Posterior cingulate gyrus (tissue), 11 donors: ENCODE measurements at regions of chr17 and their contacts with region 1.

Region 1: GRCh38 chr17:34998205-34998604 is 17.9 kb downstream of the LIG3 start:
- DNase-seq: peak; percentile 50 to 97 (median 77)

Region 2: GRCh38 chr17:34756637-34757021 is 241.6 kb before region 1 on chr17:
- intact Hi-C with region 1: no loop called
- DNase-seq: peak in 3 of 10 donors; percentile 12 to 83 (median 52)

Region 3: DNA sequence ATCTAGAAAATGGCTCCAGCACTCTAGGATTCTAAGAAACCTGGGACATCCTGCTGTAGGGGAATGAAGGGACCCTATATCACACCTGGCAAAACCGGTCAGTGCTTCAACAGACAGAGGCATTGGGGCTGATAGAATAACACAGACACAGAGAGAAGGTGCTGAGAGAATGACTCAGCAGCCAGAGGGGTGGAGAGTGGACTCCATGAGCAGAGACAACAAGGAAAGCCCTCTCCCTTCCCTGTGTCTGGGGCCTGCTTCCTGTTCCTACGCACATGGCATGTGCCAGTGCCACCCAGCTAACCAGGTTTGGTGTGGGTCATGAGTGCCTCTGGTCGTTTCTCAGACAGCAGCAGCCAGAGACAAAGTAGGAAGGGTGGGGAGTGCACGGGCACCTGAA is 177.3 kb before region 1 on chr17:
- intact Hi-C with region 1: no loop called
- DNase-seq: no peak

Region 4: DNA sequence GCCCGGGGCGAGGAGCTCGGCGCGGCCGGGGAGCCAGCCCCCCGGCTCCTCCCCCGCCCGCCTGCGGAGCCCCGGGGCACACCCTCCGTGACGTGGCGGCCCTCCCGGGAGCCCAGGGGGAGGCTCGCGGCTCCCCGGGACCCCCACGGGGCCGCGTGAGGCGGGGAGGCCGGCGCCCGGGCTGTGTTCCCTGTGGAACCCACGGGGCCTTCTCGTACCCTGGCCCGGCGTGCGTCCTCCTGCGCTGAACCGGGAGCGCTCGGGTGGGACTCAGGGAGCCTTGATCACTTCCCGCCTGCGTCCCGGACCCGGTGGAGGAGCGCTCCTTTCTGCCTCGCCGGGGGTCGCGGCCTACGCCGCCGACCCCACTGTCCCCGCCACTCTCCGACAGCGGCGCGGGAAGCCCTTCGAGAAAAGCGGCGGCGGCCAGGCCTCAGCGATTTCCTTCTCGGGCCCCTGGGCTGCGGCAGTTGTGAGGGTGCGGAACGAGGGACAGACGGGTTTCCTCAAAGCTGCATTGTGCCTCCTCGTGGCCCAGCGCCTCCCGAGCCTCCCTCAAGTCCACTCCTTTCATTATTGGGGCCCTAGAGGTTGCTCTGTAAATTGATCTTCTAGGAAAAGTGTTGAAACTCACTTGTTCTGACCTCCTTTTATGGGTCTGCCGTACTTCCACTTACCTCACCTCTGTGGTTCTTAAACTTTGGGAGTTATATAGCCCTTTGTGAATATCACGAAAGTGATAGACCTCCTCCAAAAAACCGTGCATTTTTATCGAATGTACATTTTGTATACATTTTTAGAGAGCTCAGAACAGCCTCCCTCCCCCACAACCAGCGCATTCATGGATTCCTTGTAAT is 17.3 kb before region 1 on chr17:
- intact Hi-C with region 1: no loop called
- DNase-seq: peak; percentile 41 to 96 (median 65)

Region 5: DNA sequence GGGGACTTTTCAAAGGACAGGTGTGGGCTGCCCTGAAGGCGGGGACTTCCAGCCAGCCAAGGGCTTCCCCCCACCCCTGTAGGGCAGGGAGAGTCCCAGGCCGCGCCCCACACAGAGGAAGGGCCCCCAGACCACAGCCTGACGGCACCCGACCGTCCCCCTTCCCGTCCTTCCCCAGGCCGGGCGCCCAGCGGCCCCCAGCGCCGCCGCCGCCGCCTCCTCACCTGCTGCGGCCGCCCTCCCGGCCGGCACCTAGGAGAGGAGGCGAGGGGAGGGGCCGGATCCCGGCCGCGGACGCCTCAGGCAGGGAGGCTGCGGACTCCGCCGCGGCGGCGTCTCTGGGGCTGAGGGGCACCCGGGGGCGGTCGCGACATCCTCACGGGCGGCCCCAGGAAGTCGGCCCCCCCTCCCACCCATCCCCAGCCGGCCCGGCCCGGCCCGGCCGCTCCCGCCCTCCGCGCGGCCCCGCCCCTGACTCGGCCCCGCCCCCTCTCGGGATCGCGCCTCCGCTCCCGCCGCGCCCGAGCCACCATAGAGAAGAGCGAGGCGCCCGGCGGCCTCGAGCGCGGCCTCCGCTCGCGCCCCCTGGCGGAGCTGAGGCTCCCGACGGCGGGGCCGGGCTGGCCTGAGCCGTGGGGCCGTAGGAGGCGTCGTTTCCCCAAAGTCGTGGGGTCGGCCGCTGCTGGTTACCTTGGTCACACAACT is 90.8 kb after region 1 on chr17:
- intact Hi-C with region 1: loop called (anchors 1 kb)
- DNase-seq: peak; percentile 77 to 98 (median 85)

Region 6: DNA sequence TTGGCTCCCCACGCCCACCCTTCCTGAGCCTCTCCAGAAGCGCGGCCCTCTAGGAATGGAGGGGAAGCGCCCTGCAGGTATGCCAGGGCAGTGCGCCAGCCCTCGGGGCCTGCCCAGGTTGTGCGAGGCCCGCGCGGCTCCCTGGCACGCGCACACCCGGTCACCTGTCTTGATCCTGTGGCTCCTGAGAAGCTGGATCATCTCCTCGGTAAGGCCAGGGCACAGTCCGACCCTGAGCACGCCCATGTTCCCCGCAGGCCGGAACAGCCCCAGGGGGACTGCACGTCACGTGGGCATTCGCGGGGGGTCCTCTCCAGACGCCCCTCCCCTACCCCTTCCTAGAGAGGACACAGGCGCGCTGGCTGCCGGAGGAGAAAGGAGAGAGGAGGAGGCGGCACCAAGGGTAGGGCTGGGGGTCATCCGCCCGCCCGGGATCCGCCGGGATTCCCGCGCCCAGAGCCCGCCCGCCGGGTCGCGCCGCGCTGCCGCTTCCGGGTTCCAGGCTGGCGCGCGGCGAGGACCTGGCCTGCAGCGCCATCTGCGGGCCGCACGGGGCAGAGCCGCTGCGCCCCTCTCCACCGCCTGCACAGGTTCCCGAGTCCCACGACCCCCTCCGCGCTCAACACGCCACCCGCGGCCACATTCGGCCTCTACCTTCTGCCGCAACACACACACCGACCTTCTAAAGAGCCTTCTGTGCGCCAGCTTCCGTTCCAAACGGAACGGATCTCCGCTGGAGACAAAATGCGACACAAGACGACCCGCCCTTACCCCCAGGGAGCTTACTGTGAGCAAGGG is 121.4 kb after region 1 on chr17 and contains the start of gene RAD51D:
- intact Hi-C with region 1: loop called (anchors 1 kb)
- DNase-seq: peak; percentile 42 to 96 (median 68)